HEK293T (cell line): ENCODE measurements at regions of chr3 and their contacts with region 1.

Region 1: DNA sequence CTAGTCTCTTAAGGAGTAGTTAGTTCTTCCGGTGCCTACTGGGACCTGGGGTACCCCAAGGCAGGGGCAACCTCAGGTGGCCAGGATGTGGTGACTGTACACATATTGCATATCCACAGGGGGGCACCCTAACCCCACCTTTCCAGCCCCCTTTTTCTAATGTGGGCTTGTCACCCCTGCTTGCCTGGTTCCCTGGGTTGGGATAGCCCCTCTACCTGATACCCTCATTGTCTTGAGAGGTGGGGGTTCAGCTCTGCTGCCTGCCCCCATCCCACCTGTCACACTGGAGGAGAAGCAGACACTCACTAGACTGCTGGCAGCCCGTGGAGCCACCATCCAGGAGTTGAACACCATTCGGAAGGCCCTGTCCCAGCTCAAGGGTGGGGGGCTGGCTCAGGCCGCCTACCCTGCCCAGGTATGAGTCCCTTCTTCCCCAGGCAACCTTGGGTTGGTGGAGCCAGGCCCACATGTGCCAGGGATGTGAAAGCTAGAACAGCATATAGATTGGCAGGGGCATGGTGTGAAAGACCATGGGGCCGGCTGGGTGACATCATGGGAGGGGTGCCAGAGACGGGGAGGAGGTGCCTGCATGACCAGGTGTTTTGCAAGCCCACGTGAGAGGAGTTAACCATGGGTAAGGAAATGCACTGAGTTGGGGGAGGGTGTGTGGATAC is 4.0 kb downstream of the GLYCTK start:
- DNase-seq: no peak

Region 2: GRCh38 chr3:52238761-52239701 is 52.6 kb before region 1 on chr3 and contains the start of gene TWF2:
- CTCF ChIA-PET with region 1: interaction called, 3 read pairs
- POLR2A ChIA-PET with region 1: interaction called, 15 read pairs
- DNase-seq: peak; percentile 96

Region 3: GRCh38 chr3:52268036-52268435 is 23.6 kb before region 1 on chr3:
- CTCF ChIA-PET with region 1: no interaction called
- POLR2A ChIA-PET with region 1: no interaction called
- DNase-seq: no peak

Region 4: GRCh38 chr3:52278510-52279069 is 13.1 kb before region 1 on chr3 and contains the start of gene WDR82:
- CTCF ChIA-PET with region 1: no interaction called
- POLR2A ChIA-PET with region 1: interaction called, 47 read pairs
- DNase-seq: peak; percentile 96

Region 5: GRCh38 chr3:52339612-52340011 is 48.0 kb after region 1 on chr3:
- CTCF ChIA-PET with region 1: interaction called, 9 read pairs
- POLR2A ChIA-PET with region 1: interaction called, 11 read pairs
- DNase-seq: peak; percentile 60